OCI-LY7 (cell line): ENCODE measurements at regions of chr11 and their contacts with region 1.

Region 1: GRCh38 chr11:102287964-102288724 is 29.1 kb upstream of the BIRC3 start:
- DNase-seq: peak; percentile 86
- H3K4me3 ChIP-seq: peak overlapping the region; percentile 36
- H3K27ac ChIP-seq: no peak overlapping the region
- H3K4me1 ChIP-seq: peaks cover 26% of the 10 kb centered on the region
- CTCF ChIP-seq: peak; percentile 93

Region 2: DNA sequence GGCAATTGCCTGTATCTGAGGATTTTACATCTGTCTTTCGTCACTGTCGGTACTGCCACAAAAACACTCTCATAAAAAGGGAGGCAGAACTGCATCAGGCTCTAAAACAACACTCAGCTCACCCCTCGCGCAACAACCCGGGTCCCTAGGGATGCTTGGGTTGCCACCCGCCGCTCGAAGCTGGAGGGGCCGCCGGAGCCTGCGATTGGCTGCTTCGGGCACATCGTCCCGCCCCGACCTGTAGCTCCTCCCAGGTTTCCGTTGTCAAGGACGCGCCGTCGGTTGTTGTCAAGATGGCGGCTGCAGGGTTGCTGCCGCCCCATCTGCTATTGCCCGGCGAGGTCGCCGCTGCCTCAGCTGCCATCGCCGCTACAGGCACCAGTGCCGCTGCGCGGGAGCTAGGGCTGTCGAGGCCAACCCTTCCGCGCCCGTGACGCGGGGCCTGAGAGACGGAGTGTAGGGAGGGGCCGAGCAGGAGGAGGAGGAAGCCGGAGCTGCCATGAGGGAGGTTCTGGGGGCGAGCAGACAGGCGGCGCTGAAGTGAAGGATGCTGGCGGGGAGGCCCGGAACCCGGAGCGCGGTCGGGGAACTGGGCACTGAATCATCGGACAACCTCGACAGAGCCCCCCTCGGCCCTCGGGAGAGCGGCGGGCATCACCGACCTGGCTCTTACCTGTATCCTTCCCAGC is 373.3 kb before region 1 on chr11 and contains the start of gene CEP126:
- CTCF ChIA-PET with region 1: no interaction called
- POLR2A ChIA-PET with region 1: no interaction called
- intact Hi-C with region 1: loop called (anchors 10 kb)
- DNase-seq: peak; percentile 97
- H3K4me3 ChIP-seq: peak within 1 kb of the TSS; percentile 73
- H3K27ac ChIP-seq: peak within 1 kb of the TSS; percentile 78
- H3K4me1 ChIP-seq: peaks cover 18% of the 10 kb centered on the region
- CTCF ChIP-seq: peak; percentile 66
- total RNA-seq, gene CEP126: 1.5 and 3.2 TPM in 2 replicates

Region 3: DNA sequence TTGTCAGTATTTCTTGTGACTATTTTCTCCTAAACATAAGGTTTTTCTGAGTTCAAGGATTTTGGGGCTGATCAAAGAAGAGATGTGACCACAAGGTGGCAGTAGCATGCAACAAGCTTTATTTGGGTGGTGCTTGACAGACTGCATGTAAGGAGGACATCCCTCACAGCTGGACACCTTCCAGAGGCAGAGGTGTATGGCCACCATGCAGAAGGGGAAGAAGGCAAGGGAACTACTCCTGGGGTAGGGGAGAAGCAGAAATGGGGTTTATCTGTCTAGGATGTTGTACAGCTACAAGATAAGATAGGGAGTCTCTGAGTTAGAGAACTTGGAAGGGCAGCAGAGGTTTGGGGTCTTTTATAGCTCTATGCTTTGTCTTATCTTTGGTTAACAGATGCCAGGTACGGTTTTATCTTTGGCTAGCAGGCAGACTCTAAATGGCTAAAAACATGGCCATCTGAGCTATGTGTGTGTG is 53.7 kb after region 1 on chr11:
- CTCF ChIA-PET with region 1: interaction called, 4 read pairs
- POLR2A ChIA-PET with region 1: interaction called, 6 read pairs
- intact Hi-C with region 1: loop called (anchors 1 kb)
- DNase-seq: peak; percentile 86
- H3K4me3 ChIP-seq: no peak overlapping the region
- H3K27ac ChIP-seq: no peak overlapping the region
- H3K4me1 ChIP-seq: peaks cover 11% of the 10 kb centered on the region
- CTCF ChIP-seq: peak; percentile 97

Region 4: DNA sequence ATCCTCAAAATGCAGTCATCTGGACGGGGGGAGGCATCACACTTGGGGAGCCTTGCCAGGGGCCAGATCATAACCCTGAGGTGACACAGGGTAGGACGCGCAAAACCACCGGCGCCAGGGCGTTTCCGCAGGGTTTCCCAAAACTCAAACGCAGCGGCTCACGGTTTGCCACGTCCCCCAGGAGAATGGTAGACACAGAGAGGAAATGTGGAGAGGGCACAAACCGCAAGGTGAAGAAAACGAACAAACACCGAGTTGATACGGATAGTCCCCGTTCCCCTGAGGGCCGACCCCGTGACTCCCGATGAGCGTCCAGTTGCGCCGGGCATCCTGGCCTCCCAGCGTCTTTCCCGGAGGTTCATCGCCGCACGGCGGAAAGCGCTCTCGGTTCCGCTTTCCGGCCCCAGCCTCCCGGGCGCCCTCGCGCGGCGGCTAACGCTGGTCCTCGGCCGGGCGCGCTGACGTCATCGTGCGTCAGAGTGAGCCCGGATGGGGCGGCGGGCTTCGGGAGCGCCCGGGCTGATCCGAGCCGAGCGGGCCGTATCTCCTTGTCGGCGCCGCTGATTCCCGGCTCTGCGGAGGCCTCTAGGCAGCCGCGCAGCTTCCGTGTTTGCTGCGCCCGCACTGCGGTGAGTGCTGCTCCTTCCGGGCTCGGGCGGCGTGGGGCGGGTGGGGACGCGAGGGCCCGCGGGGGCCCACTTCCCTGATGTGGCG is 58.8 kb after region 1 on chr11 and contains the start of gene BIRC2:
- CTCF ChIA-PET with region 1: interaction called, 4 read pairs
- POLR2A ChIA-PET with region 1: interaction called, 10 read pairs
- intact Hi-C with region 1: loop called (anchors 1 kb)
- DNase-seq: peak; percentile 95
- H3K4me3 ChIP-seq: peak within 1 kb of the TSS; percentile 76
- H3K27ac ChIP-seq: peak within 1 kb of the TSS; percentile 78
- H3K4me1 ChIP-seq: peaks cover 25% of the 10 kb centered on the region
- CTCF ChIP-seq: peak; percentile 75
- total RNA-seq, gene BIRC2: 32.6 and 38.0 TPM in 2 replicates

Region 5: GRCh38 chr11:102666331-102666957 is 378.3 kb after region 1 on chr11:
- CTCF ChIA-PET with region 1: no interaction called
- POLR2A ChIA-PET with region 1: no interaction called
- intact Hi-C with region 1: loop called (anchors 5 kb)
- DNase-seq: peak; percentile 56
- H3K4me3 ChIP-seq: no peak overlapping the region
- H3K27ac ChIP-seq: no peak overlapping the region
- H3K4me1 ChIP-seq: no peaks in the 10 kb centered on the region
- CTCF ChIP-seq: peak; percentile 98